ENCODE measurements at regions of chr4 and their contacts with region 1.

Region 1: GRCh38 chr4:176195184-176195978 is at the start of gene SPATA4:
- DNase-seq: peak; percentile 96 to 98 (median 98)
- ATAC-seq: peak; percentile 100
- H3K4me3 ChIP-seq: peak within 1 kb of the TSS; percentile 65
- H3K27ac ChIP-seq: peak within 1 kb of the TSS; percentile 55
- H3K4me1 ChIP-seq: no peaks in the 10 kb centered on the region
- H3K27me3 ChIP-seq: no peaks in the 10 kb centered on the region
- total RNA-seq, gene SPATA4: 0.23 to 1.0 TPM in 2 of 4 donors, not detected in the others

Region 2: DNA sequence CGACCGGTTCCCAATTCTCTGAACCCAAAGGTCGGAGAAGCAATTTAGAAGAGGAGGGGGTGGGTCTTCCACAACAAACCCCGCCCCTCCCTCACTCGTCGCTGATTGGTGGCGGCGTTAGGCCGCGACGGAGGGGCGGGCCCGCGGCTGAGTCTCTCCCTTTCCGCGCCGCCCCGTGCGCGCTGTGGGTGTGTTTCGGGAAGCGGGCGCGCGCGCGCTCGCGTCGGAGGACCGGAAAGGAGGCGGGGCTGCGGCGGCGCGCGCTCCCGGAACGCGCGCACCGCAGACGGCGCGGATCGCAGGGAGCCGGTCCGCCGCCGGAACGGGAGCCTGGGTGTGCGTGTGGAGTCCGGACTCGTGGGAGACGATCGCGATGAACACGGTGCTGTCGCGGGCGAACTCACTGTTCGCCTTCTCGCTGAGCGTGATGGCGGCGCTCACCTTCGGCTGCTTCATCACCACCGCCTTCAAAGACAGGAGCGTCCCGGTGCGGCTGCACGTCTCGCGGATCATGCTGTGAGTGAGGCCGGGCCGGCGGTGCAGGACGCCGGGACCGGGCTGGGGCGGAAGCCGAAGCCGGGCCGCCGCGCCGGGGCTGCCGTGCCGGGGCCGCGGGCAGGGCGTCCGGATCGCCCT is 124.4 kb after region 1 on chr4 and contains the start of gene SPCS3:
- intact Hi-C with region 1: loop called in 1 of 4 experiments (anchors 10 kb)
- DNase-seq: peak; percentile 97 to 99 (median 99)
- ATAC-seq: peak; percentile 99 to 100
- H3K4me3 ChIP-seq: peak within 1 kb of the TSS; percentile 58
- H3K27ac ChIP-seq: peak within 1 kb of the TSS; percentile 92
- H3K4me1 ChIP-seq: no peaks in the 10 kb centered on the region
- H3K27me3 ChIP-seq: no peaks in the 10 kb centered on the region
- total RNA-seq, gene SPCS3: 73.8 to 139 (median 88.2) TPM